ENCODE measurements at regions of chr14 and their contacts with region 1.

Region 1: DNA sequence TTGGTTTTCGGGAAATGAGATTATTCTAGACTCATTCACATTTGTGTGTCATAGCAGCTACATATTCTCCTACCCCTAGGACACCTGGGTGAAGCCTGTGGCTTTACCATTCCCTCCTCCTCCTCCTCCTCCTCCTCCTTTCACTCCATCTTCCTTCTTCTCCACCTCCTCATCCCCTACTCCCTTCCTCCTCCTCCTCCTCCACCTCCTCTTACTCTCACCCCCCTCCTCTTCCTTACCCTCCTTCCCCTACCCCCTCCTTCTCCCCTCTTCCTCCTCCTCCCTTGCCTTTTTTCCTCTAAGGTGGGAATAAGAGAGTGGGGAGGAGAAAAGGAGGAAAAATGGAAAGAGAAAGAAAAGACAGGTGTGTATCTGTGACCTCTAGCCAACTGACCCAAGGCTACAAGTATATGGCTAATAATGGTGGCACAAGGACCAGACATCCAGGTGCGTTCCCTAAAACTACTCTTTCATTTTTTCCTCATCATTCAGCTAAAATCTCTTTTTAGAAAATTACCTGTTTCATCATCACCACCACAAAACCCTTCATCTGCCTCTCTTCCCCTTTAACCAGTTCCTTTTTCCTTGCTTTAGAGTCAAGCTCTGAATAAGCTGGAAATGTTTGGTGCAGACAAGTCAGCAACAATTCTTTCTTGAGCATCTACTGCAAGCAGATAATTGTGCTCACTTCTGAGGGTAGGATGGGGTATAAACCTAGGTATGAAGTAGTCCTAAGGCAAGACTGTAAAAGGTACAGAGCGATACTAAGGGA is 149.8 kb upstream of the FOXN3 start:
- DNase-seq: no peak

Region 2: DNA sequence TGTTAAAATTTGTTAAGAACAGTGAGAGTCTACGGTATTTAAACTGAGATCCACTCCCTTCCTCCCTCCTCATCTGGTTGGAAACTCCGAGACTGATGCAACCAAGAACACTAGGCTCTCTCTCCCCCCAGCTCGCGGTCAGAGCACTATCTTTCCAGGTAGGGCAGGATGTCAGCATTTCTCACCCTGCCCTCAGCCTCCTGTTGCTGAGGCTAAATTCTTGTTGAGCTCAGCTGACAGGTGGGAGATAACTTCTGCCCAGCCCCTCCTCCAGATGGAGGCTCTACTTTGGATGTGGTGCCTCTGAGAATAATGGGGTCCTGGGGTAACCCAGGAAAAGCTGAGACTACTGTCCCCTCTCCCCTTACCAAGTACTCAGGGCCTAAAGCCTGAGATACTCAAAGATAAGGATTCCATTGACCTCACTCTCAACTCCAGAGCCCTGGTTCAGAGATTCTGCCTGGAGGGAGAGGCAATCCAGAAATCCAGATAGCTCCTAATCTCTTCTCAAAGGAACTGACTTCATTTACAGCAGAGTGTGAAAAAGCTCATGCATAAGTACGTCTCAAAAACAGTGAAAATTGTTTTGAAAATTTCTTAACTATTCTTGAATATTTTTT is 884.2 kb before region 1 on chr14:
- intact Hi-C with region 1: loop called in 1 of 2 experiments (anchors 5 kb)
- DNase-seq: no peak

Region 3: DNA sequence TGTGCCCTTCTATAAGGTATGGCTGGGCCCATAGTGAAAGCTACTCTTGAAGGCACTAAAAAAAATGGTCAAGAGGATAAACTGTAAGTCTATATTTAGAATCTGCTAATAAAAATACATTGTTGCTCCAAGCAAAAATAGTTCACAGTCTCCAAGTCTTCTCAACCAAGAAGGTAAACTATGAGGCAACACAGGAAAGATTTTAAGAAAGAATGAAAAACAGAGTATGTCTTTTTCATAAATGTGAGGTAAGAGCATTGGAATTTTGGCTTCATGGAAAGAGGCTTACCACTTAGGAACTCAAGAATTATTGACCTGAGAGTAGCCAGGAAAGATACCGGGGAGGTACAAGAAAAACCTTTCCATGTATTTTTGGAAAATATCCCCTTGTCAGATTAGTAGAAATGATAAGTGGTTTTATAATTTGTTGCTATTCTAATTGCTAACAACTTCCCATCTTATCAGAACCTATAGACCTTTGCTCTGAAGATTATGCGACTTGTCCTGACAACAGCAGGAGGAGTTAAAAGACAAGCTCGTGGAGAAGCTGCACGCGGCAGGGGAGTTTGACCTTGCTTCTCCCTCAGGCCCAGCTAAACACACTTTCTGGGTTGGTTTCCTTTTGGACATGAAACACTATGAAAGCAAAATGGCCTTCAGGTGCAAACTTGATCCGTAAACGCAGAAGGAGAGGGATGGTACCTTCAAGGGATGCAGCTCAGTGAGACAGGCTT is 387.9 kb before region 1 on chr14:
- intact Hi-C with region 1: no loop called
- DNase-seq: no peak

Region 4: DNA sequence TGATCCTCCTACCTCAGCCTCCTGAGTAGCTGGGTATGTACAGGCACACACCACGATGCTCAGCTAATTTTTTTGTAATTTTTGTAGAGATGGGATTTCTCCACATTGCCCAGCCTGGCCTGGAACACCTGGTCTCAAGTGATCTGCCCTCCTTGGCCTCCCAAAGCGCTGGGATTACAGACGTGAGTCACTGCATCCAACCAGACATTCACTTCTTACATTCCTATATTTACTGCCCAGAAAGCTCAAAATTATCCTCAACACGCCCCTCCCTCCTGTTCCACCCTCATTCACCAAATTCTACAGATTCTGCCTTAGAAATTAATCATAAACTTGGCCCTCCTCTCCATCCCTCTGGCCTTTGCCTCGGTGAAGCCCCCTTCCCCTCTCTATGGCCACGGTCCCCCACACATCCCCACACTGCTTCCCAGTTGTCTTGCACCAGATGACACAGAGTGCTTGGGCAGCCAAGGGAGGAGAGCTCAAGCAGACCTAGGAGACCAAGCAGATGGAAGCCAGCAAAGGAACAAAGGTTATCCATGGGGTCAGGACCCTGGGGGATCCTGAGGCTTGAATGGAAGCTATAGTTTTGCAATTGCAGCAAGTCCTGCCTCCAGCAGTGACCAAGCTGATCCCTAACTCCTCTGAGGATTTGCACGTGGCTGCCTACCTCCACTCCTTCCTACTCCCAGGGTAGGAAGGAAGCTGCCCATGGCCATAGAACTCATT is 63.4 kb after region 1 on chr14:
- intact Hi-C with region 1: no loop called
- DNase-seq: no peak